CD4-positive, alpha-beta memory T cell (primary cell): ENCODE measurements at regions of chr17 and their contacts with region 1.

Region 1: GRCh38 chr17:38428112-38428642 is at the start of gene ARHGAP23:
- DNase-seq: peak in 3 of 5 donors; percentile 21 to 33 (median 26)
- H3K4me3 ChIP-seq: peak within 1 kb of the TSS in 1 of 2 donors; percentile 41
- H3K4me3 Mint-ChIP-seq: peak within 1 kb of the TSS; percentile 51 to 83 (median 77)
- H3K27ac ChIP-seq: no peak within 1 kb of the TSS
- H3K27ac Mint-ChIP-seq: peak within 1 kb of the TSS in 6 of 7 donors; percentile 9 to 89 (median 42)
- H3K4me1 ChIP-seq: peaks cover 10% of the 10 kb centered on the region
- H3K4me1 Mint-ChIP-seq: peaks cover 4 to 12% (median 7%) of the 10 kb centered on the region in 4 donors
- H3K27me3 ChIP-seq: no peaks in the 10 kb centered on the region
- H3K27me3 Mint-ChIP-seq: peaks cover 14 to 24% of the 10 kb centered on the region in 2 donors
- total RNA-seq, gene ARHGAP23: not detected

Region 2: GRCh38 chr17:38415250-38416194 is 12.7 kb before region 1 on chr17:
- CTCF ChIA-PET with region 1: interaction called, 15 read pairs
- POLR2A ChIA-PET with region 1: no interaction called
- intact Hi-C with region 1: no loop called
- DNase-seq: no peak
- H3K4me3 ChIP-seq: no peak overlapping the region
- H3K4me3 Mint-ChIP-seq: no peak overlapping the region
- H3K27ac ChIP-seq: no peak overlapping the region
- H3K27ac Mint-ChIP-seq: no peak overlapping the region
- H3K4me1 ChIP-seq: peaks cover 9% of the 10 kb centered on the region
- H3K4me1 Mint-ChIP-seq: peaks cover 2 to 12% (median 3%) of the 10 kb centered on the region in 4 donors
- H3K27me3 ChIP-seq: peaks cover 12% of the 10 kb centered on the region
- H3K27me3 Mint-ChIP-seq: peaks cover 25 to 31% of the 10 kb centered on the region in 2 donors

Region 3: DNA sequence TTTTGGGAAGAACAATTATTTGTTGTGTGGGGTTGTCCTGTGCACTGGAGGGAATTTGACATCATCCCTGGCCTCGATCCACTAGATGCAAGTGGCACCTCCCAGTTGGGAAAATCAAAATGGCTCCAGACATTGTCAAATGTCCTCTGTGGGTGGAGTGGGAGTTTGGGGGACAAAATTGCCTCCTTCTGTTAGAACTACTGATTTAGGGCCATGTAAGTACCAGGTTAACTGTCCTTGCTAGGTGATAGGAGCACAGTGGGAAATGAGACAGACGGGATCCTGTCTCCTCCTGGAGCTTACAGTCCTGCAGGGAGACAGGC is 56.9 kb after region 1 on chr17:
- CTCF ChIA-PET with region 1: interaction called, 3 read pairs
- POLR2A ChIA-PET with region 1: no interaction called
- intact Hi-C with region 1: loop called (anchors 1 kb)
- DNase-seq: peak in 1 of 5 donors; percentile 7
- H3K4me3 ChIP-seq: no peak overlapping the region
- H3K4me3 Mint-ChIP-seq: peak overlapping the region in 7 of 8 donors; percentile 17 to 71 (median 61)
- H3K27ac ChIP-seq: no peak overlapping the region
- H3K27ac Mint-ChIP-seq: peak overlapping the region in 6 of 7 donors; percentile 12 to 76 (median 73)
- H3K4me1 ChIP-seq: peaks cover 3% of the 10 kb centered on the region
- H3K4me1 Mint-ChIP-seq: peaks cover 4 to 13% (median 11%) of the 10 kb centered on the region in 4 donors
- H3K27me3 ChIP-seq: no peaks in the 10 kb centered on the region
- H3K27me3 Mint-ChIP-seq: no peaks in the 10 kb centered on the region

Region 4: DNA sequence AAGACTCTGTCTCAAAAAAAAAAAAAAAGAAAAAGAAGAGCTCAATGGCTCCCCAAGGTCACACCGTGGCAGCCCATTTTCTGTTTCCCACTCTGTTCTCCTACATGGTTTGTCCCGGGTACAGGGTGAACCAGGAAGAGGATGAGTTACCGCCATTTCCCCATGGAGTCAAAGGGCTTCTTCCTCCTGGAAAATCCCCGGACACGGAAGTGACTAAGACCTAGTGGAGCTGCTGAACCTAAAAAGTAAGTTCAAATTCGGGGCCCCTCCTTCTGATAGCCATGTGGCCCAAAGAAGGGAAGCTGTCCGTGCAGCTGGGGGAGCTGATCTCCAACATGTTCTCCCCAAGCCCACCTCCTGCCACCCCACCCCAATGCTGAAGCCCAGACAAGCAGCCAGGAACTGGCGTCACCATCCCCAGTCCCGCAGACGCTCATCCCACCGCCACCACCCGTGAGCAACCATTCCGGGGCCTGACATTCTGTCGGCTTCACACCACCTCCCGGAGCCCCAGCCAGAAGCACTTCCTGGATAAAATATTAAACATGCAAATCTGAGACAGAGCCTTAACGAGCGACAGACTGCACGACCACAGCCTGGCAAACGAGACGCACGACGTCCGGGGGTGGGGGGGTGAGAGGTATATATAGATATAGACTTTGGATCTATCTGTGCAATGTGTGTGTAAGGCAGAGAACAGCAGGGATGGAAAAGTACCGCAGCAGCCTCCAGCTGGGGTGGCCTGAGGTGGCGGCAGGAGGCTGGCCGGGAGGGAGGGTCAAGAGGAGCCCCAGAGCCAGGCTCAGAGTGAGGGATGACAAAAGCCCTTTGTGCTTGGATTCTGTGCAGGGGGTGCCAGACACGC is 229.0 kb after region 1 on chr17:
- CTCF ChIA-PET with region 1: no interaction called
- POLR2A ChIA-PET with region 1: no interaction called
- intact Hi-C with region 1: no loop called
- DNase-seq: no peak
- H3K4me3 ChIP-seq: no peak overlapping the region
- H3K4me3 Mint-ChIP-seq: no peak overlapping the region
- H3K27ac ChIP-seq: no peak overlapping the region
- H3K27ac Mint-ChIP-seq: no peak overlapping the region
- H3K4me1 ChIP-seq: peaks cover 11% of the 10 kb centered on the region
- H3K4me1 Mint-ChIP-seq: peaks cover 2 to 6% (median 3%) of the 10 kb centered on the region in 4 donors
- H3K27me3 ChIP-seq: peaks cover 11% of the 10 kb centered on the region
- H3K27me3 Mint-ChIP-seq: peaks cover 26 to 35% of the 10 kb centered on the region in 2 donors

Region 5: GRCh38 chr17:38667099-38667786 is 239.1 kb after region 1 on chr17:
- CTCF ChIA-PET with region 1: interaction called, 3 read pairs
- POLR2A ChIA-PET with region 1: no interaction called
- intact Hi-C with region 1: loop called (anchors 1 kb)
- DNase-seq: peak; percentile 43 to 57 (median 51)
- H3K4me3 ChIP-seq: no peak overlapping the region
- H3K4me3 Mint-ChIP-seq: no peak overlapping the region
- H3K27ac ChIP-seq: no peak overlapping the region
- H3K27ac Mint-ChIP-seq: no peak overlapping the region
- H3K4me1 ChIP-seq: no peaks in the 10 kb centered on the region
- H3K4me1 Mint-ChIP-seq: peaks cover 0 to 8% (median 1%) of the 10 kb centered on the region in 4 donors
- H3K27me3 ChIP-seq: peaks cover 20% of the 10 kb centered on the region
- H3K27me3 Mint-ChIP-seq: peaks cover 41 to 50% of the 10 kb centered on the region in 2 donors